ENCODE measurements at regions of chr9 and their contacts with region 1.

Region 1: DNA sequence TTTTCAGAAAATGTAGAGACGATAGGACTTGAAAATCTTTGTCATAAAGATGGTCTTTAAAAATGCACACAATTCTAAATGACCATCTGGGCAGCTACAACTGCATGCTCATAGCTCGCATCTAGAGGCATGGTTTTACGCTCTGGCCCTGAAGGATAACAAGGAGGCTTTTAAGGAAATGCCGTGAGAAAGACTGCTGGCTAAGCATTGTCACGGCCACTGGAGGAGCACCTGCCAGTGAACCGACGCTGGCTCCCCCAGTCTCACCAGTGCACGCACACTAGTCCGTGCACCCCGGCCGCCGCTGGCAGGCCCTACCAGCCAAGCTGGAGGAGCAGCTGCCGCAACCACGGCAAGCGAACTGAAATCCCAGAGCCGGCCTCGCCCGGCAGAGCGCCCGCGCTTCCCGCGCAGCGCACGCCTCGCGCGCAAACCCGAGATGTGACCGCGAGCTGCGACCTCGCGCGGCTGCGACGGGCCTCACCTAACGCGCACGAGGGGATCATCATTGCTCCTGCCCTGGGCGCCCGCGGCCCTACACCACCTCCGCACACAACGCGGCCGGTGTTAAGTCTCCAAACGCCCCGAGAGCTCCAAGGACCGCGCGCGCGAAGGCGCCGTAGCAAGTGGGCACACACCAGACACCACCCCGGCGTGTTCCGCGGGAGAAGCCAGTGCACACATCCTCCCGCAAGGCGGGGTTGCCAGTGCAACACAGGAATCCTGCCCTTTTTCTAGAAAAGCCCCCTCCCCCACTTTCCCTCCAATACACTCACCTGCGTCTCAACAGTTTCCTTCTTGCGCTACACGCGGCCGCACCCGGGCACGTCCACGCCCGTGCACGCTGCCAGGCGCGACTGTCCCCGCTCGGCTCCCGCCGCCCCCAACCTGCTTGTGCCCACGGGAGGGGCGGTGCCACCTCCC is 5.3 kb downstream of the ELAVL2 start:
- DNase-seq: no peak
- H3K4me3 ChIP-seq: peak overlapping the region; percentile 29 to 69 (median 52)
- H3K27ac ChIP-seq: no peak overlapping the region
- H3K4me1 ChIP-seq: peaks cover 0 to 4% of the 10 kb centered on the region in 2 donors
- H3K27me3 ChIP-seq: peaks cover 6 to 53% of the 10 kb centered on the region in 2 donors
- CTCF ChIP-seq: no peak
- POLR2A ChIP-seq: no peak

Region 2: DNA sequence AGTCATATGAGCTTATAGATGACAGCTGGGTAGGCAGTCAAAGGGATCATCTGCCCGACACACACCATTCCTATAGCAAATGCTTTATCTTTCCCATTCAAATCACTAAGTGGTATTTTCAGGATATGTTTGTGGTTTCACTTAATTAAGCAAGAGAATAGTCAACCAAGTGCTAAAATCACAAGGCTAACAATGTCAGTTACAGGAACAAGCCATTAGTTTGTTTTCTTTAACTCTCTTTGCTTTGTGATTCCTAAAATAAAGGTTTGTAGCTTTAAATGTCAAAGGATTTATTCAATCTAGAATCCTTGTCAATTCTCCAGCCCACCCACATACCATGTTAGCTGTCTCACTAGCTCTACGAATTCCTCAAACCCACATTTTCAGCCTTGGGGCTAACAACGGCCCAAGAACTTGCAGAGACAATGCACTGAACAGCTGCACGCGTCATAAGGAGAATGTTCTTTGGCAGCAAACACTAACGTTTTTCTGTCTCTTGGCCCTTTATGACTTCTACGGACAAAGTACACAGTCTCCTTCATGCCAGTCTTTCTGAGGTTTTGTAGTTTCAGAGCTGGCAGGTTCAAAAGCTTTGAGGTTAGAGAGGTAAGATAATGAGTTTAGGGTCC is 51.3 kb before region 1 on chr9:
- intact Hi-C with region 1: no loop called
- DNase-seq: peak in 1 of 2 donors; percentile 81
- H3K4me3 ChIP-seq: no peak overlapping the region
- H3K27ac ChIP-seq: no peak overlapping the region
- H3K4me1 ChIP-seq: peaks cover 0 to 13% of the 10 kb centered on the region in 2 donors
- H3K27me3 ChIP-seq: no peaks in the 10 kb centered on the region
- CTCF ChIP-seq: no peak
- POLR2A ChIP-seq: no peak

Region 3: DNA sequence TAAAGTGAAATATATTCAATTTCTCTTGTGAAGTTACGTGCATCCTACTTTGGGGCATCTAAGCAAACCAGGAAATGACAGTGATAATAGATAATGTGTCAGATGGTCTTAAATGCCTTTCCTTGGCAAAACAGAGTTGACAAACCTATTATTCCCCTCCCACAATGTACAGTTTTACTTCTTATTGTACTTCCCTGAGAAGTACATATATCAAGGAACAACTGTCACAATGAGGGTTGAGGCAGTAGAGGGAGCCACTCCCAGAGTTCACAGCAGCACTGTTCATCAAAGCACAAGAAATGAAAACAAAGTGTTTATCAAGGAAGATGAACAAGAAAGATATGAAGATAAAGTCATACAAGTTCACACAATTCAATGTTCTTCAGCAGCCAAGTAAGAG is 35.8 kb before region 1 on chr9:
- intact Hi-C with region 1: loop called (anchors 1 kb)
- DNase-seq: no peak
- H3K4me3 ChIP-seq: no peak overlapping the region
- H3K27ac ChIP-seq: no peak overlapping the region
- H3K4me1 ChIP-seq: no peaks in the 10 kb centered on the region
- H3K27me3 ChIP-seq: no peaks in the 10 kb centered on the region
- CTCF ChIP-seq: no peak
- POLR2A ChIP-seq: no peak

Measured in breast epithelium (tissue), 4 donors.